ENCODE measurements at regions of chr12 and their contacts with region 1.

Region 1: DNA sequence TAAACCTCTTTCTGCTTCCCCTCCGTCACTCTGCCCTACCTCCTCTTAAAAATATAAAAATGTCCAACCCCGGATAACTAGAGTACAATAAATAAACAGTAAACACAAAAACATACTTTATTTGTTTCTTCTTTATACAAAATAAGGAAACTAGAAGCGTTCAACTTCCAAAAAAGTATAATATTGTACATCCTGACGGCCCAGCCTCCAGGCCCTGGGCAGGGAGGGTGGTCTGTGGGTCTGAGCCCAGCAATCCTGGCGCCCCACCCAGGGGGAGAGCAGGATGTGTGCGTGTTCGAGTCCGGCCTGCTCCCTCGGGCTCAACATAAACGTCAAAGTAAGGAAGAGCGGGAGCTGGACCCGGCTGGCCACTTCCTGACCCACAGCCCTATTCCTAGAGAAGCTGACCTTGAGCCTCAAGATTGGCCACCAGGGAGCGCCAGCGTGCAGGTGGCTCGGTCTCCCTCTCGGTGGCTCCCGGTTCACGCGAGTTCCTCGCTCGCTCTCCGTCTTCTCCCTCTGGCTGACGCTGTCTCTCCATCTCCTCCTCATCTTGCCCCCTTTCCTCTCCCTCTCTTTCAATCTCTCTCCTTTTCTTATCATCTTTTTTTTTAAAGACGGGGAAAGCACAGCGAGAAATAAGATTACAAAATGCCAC is 9.4 kb downstream of the LHX5 start:
- DNase-seq: peak; percentile 65
- H3K4me3 ChIP-seq: no peak overlapping the region
- H3K27ac ChIP-seq: no peak overlapping the region
- H3K4me1 ChIP-seq: no peaks in the 10 kb centered on the region
- H3K27me3 ChIP-seq: peaks cover 32 to 54% of the 10 kb centered on the region in 2 experiments
- CTCF ChIP-seq: peak; percentile 84 to 98
- POLR2A ChIP-seq: no peak

Region 2: GRCh38 chr12:113439606-113440030 is 22.6 kb before region 1 on chr12:
- CTCF ChIA-PET with region 1: interaction called, 13 read pairs
- POLR2A ChIA-PET with region 1: no interaction called
- dilution Hi-C with region 1: no loop called
- intact Hi-C with region 1: no loop called
- DNase-seq: peak; percentile 44
- H3K4me3 ChIP-seq: no peak overlapping the region
- H3K27ac ChIP-seq: no peak overlapping the region
- H3K4me1 ChIP-seq: no peaks in the 10 kb centered on the region
- H3K27me3 ChIP-seq: peaks cover 0 to 2% of the 10 kb centered on the region in 2 experiments
- CTCF ChIP-seq: peak; percentile 68 to 80
- POLR2A ChIP-seq: no peak

Region 3: GRCh38 chr12:113445544-113446171 is 16.6 kb before region 1 on chr12:
- CTCF ChIA-PET with region 1: interaction called, 13 read pairs
- POLR2A ChIA-PET with region 1: no interaction called
- dilution Hi-C with region 1: no loop called
- intact Hi-C with region 1: no loop called
- DNase-seq: no peak
- H3K4me3 ChIP-seq: no peak overlapping the region
- H3K27ac ChIP-seq: no peak overlapping the region
- H3K4me1 ChIP-seq: no peaks in the 10 kb centered on the region
- H3K27me3 ChIP-seq: peaks cover 0 to 3% of the 10 kb centered on the region in 2 experiments
- CTCF ChIP-seq: no peak
- POLR2A ChIP-seq: no peak

Region 4: DNA sequence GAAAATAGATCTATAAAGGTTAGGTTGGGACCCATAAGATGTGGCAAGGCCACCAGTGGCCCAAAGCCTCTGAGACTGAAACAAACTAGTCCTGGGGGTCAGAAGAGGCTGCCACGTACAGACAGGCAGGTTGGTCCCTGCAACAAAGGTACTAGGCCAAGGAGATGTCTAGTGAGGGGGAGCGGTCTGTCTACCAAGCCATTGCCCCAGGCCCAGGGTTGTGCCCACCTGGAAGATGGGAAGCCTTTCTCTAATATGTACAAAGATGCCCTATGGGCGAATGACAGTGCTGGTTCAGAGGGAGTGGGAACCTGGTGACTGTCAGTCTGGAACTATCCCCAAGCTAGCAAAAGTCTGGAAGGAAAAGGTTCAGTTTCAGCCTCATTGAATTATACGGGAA is 270.7 kb after region 1 on chr12:
- CTCF ChIA-PET with region 1: no interaction called
- POLR2A ChIA-PET with region 1: no interaction called
- dilution Hi-C with region 1: no loop called
- intact Hi-C with region 1: loop called (anchors 2 kb)
- DNase-seq: no peak
- H3K4me3 ChIP-seq: no peak overlapping the region
- H3K27ac ChIP-seq: no peak overlapping the region
- H3K4me1 ChIP-seq: no peaks in the 10 kb centered on the region
- H3K27me3 ChIP-seq: no peaks in the 10 kb centered on the region
- CTCF ChIP-seq: no peak
- POLR2A ChIP-seq: no peak

Region 5: GRCh38 chr12:113831016-113831415 is 368.8 kb after region 1 on chr12:
- CTCF ChIA-PET with region 1: no interaction called
- POLR2A ChIA-PET with region 1: no interaction called
- dilution Hi-C with region 1: no loop called
- intact Hi-C with region 1: loop called (anchors 5 kb)
- DNase-seq: peak; percentile 76
- H3K4me3 ChIP-seq: no peak overlapping the region
- H3K27ac ChIP-seq: peak overlapping the region; percentile 42
- H3K4me1 ChIP-seq: peaks cover 13% of the 10 kb centered on the region
- H3K27me3 ChIP-seq: no peaks in the 10 kb centered on the region
- CTCF ChIP-seq: no peak
- POLR2A ChIP-seq: no peak

Region 6: GRCh38 chr12:113919791-113920190 is 457.5 kb after region 1 on chr12:
- CTCF ChIA-PET with region 1: interaction called, 112 read pairs
- POLR2A ChIA-PET with region 1: no interaction called
- dilution Hi-C with region 1: no loop called
- intact Hi-C with region 1: no loop called
- DNase-seq: no peak
- H3K4me3 ChIP-seq: no peak overlapping the region
- H3K27ac ChIP-seq: no peak overlapping the region
- H3K4me1 ChIP-seq: no peaks in the 10 kb centered on the region
- H3K27me3 ChIP-seq: no peaks in the 10 kb centered on the region
- CTCF ChIP-seq: no peak
- POLR2A ChIP-seq: no peak